Endothelial cell of umbilical vein (primary cell): ENCODE measurements at regions of chr2 and their contacts with region 1.

Region 1: DNA sequence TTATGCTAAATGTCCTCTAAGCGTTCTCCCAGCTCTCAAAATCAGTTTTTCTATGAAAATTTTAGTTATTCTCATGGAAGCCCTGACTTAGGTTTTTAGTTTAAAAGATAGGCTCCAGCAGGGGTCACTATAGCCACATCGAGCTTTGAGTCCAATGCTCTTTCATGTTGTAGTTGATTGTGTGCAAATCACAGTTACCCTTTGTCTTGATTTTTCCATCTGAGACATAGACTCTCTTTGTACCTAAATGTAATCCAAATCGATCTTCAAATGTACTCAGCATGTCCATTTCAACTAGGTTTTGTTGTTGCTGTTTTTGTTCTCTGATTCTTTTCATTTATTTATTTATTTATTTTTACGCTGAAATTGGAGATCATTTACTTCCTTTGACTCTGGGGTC is 26.4 kb upstream of the MSTN start:
- DNase-seq: peak; percentile 72
- H3K4me3 ChIP-seq: no peak overlapping the region
- H3K27ac ChIP-seq: no peak overlapping the region
- H3K4me1 ChIP-seq: no peaks in the 10 kb centered on the region
- H3K27me3 ChIP-seq: peaks cover 2 to 3% of the 10 kb centered on the region in 2 experiments
- CTCF ChIP-seq: peak; percentile 49
- POLR2A ChIP-seq: no peak

Region 2: GRCh38 chr2:190180313-190181122 is 91.6 kb after region 1 on chr2:
- CTCF ChIA-PET with region 1: interaction called, 4 read pairs
- POLR2A ChIA-PET with region 1: no interaction called
- dilution Hi-C with region 1: no loop called
- intact Hi-C with region 1: loop called (anchors 2 kb)
- DNase-seq: peak; percentile 49
- H3K4me3 ChIP-seq: peak overlapping the region; percentile 59 to 83 (median 60)
- H3K27ac ChIP-seq: no peak overlapping the region
- H3K4me1 ChIP-seq: peaks cover 2% of the 10 kb centered on the region
- H3K27me3 ChIP-seq: no peaks in the 10 kb centered on the region
- CTCF ChIP-seq: peak; percentile 42 to 74
- POLR2A ChIP-seq: no peak

Region 3: GRCh38 chr2:190277234-190278112 is 188.6 kb after region 1 on chr2:
- CTCF ChIA-PET with region 1: interaction called, 41 read pairs
- POLR2A ChIA-PET with region 1: no interaction called
- dilution Hi-C with region 1: no loop called
- intact Hi-C with region 1: loop called (anchors 1 kb)
- DNase-seq: peak; percentile 70
- H3K4me3 ChIP-seq: no peak overlapping the region
- H3K27ac ChIP-seq: peak overlapping the region; percentile 8
- H3K4me1 ChIP-seq: peaks cover 2% of the 10 kb centered on the region
- H3K27me3 ChIP-seq: no peaks in the 10 kb centered on the region
- CTCF ChIP-seq: peak; percentile 34 to 39
- POLR2A ChIP-seq: no peak

Region 4: DNA sequence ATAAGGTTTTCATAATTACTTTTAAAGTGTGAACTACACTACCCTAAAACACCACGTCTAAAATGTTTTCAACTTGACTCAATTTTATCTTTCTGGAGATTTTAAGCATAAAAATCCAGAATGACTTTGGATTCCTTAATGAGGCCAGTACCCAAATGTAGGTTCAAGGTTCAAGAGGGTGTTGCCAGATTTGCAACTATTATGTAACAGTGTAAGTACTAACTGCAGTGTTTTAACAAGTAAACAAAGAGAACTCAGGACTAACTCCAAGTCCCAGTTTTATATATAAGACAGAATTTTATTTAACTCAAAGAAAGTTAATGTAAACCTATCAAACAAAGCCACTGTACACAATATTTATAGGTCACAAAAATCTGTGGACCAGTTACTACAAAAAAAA is 225.0 kb after region 1 on chr2:
- CTCF ChIA-PET with region 1: interaction called, 14 read pairs
- POLR2A ChIA-PET with region 1: no interaction called
- dilution Hi-C with region 1: no loop called
- intact Hi-C with region 1: loop called (anchors 1 kb)
- DNase-seq: no peak
- H3K4me3 ChIP-seq: no peak overlapping the region
- H3K27ac ChIP-seq: no peak overlapping the region
- H3K4me1 ChIP-seq: peaks cover 6% of the 10 kb centered on the region
- H3K27me3 ChIP-seq: no peaks in the 10 kb centered on the region
- CTCF ChIP-seq: no peak
- POLR2A ChIP-seq: no peak

Region 5: DNA sequence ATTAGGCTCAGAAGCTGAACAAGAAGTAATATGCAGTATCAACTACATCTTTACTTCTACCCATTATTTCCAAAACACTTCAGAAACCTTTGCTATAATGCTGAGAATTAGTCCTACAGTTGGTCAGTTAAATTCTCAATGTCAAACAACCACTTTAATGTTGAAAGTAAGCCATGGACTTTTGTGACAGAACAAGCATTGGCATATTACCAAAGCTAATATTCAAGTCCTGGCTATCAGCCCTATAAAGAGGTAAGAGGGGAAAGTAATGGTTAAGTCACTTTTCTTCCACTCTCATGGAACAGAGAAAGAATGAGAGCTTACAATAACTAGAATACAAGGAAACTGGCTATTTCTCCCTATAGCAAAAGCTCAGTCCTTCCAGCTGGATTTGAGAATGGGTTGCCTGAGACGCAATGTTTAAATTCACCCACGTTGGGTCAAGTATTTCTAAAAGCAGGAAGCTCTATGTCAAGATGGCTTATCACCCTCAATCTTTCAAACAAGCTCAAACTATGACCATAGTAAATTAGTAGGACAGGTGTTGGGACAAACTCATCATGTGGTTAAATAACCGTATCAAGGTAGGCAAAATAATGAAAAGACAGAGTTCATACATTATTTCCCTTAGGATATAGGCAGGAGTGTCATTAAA is 287.8 kb after region 1 on chr2:
- CTCF ChIA-PET with region 1: no interaction called
- POLR2A ChIA-PET with region 1: no interaction called
- dilution Hi-C with region 1: no loop called
- intact Hi-C with region 1: loop called (anchors 1 kb)
- DNase-seq: no peak
- H3K4me3 ChIP-seq: no peak overlapping the region
- H3K27ac ChIP-seq: no peak overlapping the region
- H3K4me1 ChIP-seq: no peaks in the 10 kb centered on the region
- H3K27me3 ChIP-seq: peaks cover 0 to 4% of the 10 kb centered on the region in 2 experiments
- CTCF ChIP-seq: no peak
- POLR2A ChIP-seq: no peak

Region 6: GRCh38 chr2:190511104-190511503 is 422.2 kb after region 1 on chr2:
- CTCF ChIA-PET with region 1: interaction called, 16 read pairs
- POLR2A ChIA-PET with region 1: no interaction called
- dilution Hi-C with region 1: no loop called
- intact Hi-C with region 1: loop called (anchors 1 kb)
- DNase-seq: peak; percentile 65
- H3K4me3 ChIP-seq: no peak overlapping the region
- H3K27ac ChIP-seq: no peak overlapping the region
- H3K4me1 ChIP-seq: no peaks in the 10 kb centered on the region
- H3K27me3 ChIP-seq: no peaks in the 10 kb centered on the region
- CTCF ChIP-seq: peak; percentile 20 to 30
- POLR2A ChIP-seq: no peak

Region 7: DNA sequence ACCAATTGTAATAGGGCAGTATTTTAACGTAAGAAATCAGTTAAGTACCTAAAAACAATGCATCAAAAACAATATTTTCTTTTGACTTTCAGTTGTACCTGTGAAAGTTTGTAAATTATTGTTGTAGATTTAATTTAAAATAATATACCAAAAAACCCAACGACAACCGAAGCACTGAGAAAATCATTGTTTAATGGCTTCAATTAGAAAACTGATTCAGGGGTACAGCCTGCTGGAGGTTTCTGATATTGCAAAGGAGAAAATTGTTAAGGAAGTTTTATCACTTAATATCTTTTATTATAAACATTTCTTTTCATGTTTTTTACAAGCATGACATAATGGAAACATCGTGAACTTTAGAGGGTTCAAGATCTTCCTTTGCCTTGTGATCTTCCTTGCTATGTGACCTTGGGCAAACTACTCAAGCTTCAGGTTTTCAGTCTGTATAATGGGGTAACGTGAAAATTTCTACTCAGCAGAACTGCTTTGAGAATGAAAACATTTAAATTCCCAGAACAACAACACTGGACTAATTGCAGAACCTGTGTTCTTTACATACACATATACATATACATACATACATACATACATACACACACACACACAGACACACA is 715.4 kb after region 1 on chr2:
- CTCF ChIA-PET with region 1: no interaction called
- POLR2A ChIA-PET with region 1: no interaction called
- dilution Hi-C with region 1: no loop called
- intact Hi-C with region 1: loop called (anchors 2 kb)
- DNase-seq: peak; percentile 74
- H3K4me3 ChIP-seq: no peak overlapping the region
- H3K27ac ChIP-seq: no peak overlapping the region
- H3K4me1 ChIP-seq: peaks cover 2% of the 10 kb centered on the region
- H3K27me3 ChIP-seq: peaks cover 0 to 3% of the 10 kb centered on the region in 2 experiments
- CTCF ChIP-seq: peak; percentile 36 to 40
- POLR2A ChIP-seq: no peak